Naive thymus-derived CD4-positive, alpha-beta T cell (primary cell): ENCODE measurements at regions of chr11 and their contacts with region 1.

Region 1: DNA sequence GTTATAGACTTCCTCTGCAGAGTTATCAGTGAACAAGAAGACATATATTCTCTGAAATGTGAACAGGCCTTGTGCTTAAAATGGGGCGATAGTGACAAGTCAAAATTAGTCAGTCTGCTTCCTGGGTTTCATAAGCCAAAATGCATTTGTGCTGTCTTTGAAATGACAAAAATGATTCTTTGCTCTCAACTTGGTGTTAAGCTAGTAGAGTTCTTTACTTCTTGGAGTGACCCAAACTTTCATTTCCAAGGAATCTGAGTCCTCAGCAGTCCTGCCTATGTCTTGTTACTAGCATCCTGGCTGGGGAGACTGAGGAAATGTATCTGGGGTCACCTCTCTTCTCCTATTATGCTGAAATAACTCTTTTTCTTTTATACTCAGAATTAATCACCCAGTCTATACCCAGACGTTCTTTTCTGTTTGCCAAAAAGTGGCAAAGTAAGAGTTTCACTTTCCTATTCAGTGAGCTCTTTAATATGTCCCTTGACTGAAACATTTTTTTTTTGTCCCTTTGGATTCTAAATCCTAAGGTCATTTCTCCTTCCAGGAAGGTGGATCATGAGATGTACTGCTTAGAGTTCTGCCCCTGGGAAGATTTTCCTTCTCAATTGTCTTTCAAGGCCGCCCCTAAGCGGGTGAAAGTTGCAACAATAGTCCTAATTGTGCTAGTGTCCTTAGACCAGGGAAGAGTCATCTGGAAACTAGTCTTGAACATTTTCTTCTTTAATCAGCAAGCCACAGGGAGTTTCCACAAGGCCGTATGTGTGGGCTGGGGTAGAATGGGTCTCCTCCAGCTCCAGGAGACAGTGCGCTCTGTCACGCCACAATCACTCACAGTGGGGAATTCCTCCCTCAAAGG is 53.0 kb upstream of the RDX start:
- DNase-seq: peak in 1 of 9 donors; percentile 79
- ATAC-seq: peak; percentile 18
- H3K4me3 ChIP-seq: no peak overlapping the region
- H3K4me3 Mint-ChIP-seq: peak overlapping the region in 5 of 10 donors; percentile 3 to 69 (median 7)
- H3K27ac ChIP-seq: no peak overlapping the region
- H3K27ac Mint-ChIP-seq: peak overlapping the region in 6 of 9 donors; percentile 6 to 96 (median 38)
- H3K4me1 ChIP-seq: peaks cover 0 to 7% of the 10 kb centered on the region in 2 donors
- H3K4me1 Mint-ChIP-seq: peaks cover 13 to 49% (median 20%) of the 10 kb centered on the region in 7 donors
- H3K27me3 ChIP-seq: no peaks in the 10 kb centered on the region
- H3K27me3 Mint-ChIP-seq: no peaks in the 10 kb centered on the region

Region 2: GRCh38 chr11:110327508-110327907 is 21.9 kb before region 1 on chr11:
- CTCF ChIA-PET with region 1: no interaction called
- POLR2A ChIA-PET with region 1: no interaction called
- intact Hi-C with region 1: loop called in 1 of 2 experiments (anchors 1 kb)
- DNase-seq: no peak
- ATAC-seq: no peak
- H3K4me3 ChIP-seq: no peak overlapping the region
- H3K4me3 Mint-ChIP-seq: peak overlapping the region in 8 of 10 donors; percentile 1 to 98 (median 22)
- H3K27ac ChIP-seq: no peak overlapping the region
- H3K27ac Mint-ChIP-seq: peak overlapping the region in 1 of 9 donors; percentile 98
- H3K4me1 ChIP-seq: peaks cover 0 to 11% of the 10 kb centered on the region in 2 donors
- H3K4me1 Mint-ChIP-seq: peaks cover 0 to 33% (median 12%) of the 10 kb centered on the region in 7 donors
- H3K27me3 ChIP-seq: no peaks in the 10 kb centered on the region
- H3K27me3 Mint-ChIP-seq: peaks cover 0 to 18% (median 4%) of the 10 kb centered on the region in 5 donors

Region 3: DNA sequence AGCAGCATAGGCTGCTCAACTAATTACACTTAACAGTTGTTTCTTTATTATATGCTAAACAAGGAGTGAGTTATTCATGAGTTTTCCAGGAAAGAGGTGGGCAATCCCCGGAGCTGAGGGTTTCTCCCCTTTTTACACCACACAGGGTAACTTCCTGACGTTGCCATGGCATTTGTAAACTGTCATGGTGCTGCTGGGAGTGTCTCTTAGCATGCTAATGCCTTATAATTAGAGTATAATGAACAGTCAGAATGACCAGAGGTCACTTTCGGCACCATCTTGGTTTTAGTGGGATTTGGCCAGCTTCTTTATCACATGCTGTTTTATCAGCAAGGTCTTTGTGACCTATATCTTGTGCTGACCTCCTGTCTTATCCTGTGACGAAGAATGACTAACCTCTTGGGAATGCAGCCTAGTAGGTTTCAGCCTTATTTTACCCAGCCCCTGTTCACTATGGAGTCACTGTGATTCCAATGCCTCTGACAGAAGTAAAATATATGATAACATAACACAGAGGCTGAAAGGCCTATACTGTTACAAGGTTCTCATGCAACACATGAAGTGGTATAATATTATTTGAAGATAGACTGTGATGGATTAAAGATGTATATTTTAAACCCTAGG is 11.7 kb before region 1 on chr11:
- CTCF ChIA-PET with region 1: no interaction called
- POLR2A ChIA-PET with region 1: no interaction called
- intact Hi-C with region 1: loop called in 1 of 2 experiments (anchors 1 kb)
- DNase-seq: peak in 1 of 9 donors; percentile 35
- ATAC-seq: no peak
- H3K4me3 ChIP-seq: no peak overlapping the region
- H3K4me3 Mint-ChIP-seq: no peak overlapping the region
- H3K27ac ChIP-seq: no peak overlapping the region
- H3K27ac Mint-ChIP-seq: peak overlapping the region in 1 of 9 donors; percentile 63
- H3K4me1 ChIP-seq: no peaks in the 10 kb centered on the region
- H3K4me1 Mint-ChIP-seq: peaks cover 0 to 26% (median 0%) of the 10 kb centered on the region in 7 donors
- H3K27me3 ChIP-seq: no peaks in the 10 kb centered on the region
- H3K27me3 Mint-ChIP-seq: peaks cover 0 to 5% (median 0%) of the 10 kb centered on the region in 5 donors

Region 4: DNA sequence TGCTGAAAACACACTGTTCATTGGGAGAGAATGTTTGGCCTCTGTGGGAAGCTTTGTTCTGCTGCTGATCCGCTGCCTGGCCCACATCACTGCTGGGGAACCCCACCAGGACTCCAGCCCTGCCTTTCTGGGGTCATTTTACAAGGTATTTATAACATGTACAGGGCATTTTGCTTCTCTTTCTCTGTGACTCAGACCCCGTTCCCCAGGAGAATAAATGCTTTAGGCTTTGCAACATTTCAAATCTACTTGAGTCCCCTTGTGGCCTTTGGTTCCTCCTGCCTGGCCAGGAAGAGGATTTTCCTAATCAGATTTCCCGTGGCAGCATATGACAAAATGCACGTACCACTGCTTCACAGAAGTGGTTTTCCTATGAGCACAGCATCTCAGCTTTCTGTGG is 1119.8 kb after region 1 on chr11:
- CTCF ChIA-PET with region 1: no interaction called
- POLR2A ChIA-PET with region 1: no interaction called
- intact Hi-C with region 1: no loop called
- DNase-seq: no peak
- ATAC-seq: no peak
- H3K4me3 ChIP-seq: no peak overlapping the region
- H3K4me3 Mint-ChIP-seq: no peak overlapping the region
- H3K27ac ChIP-seq: no peak overlapping the region
- H3K27ac Mint-ChIP-seq: no peak overlapping the region
- H3K4me1 ChIP-seq: no peaks in the 10 kb centered on the region
- H3K4me1 Mint-ChIP-seq: peaks cover 0 to 10% (median 0%) of the 10 kb centered on the region in 7 donors
- H3K27me3 ChIP-seq: peaks cover 0 to 3% of the 10 kb centered on the region in 2 donors
- H3K27me3 Mint-ChIP-seq: peaks cover 0 to 20% (median 5%) of the 10 kb centered on the region in 5 donors